Breast epithelium (tissue), 4 donors: ENCODE measurements at regions of chr10 and their contacts with region 1.

Region 1: DNA sequence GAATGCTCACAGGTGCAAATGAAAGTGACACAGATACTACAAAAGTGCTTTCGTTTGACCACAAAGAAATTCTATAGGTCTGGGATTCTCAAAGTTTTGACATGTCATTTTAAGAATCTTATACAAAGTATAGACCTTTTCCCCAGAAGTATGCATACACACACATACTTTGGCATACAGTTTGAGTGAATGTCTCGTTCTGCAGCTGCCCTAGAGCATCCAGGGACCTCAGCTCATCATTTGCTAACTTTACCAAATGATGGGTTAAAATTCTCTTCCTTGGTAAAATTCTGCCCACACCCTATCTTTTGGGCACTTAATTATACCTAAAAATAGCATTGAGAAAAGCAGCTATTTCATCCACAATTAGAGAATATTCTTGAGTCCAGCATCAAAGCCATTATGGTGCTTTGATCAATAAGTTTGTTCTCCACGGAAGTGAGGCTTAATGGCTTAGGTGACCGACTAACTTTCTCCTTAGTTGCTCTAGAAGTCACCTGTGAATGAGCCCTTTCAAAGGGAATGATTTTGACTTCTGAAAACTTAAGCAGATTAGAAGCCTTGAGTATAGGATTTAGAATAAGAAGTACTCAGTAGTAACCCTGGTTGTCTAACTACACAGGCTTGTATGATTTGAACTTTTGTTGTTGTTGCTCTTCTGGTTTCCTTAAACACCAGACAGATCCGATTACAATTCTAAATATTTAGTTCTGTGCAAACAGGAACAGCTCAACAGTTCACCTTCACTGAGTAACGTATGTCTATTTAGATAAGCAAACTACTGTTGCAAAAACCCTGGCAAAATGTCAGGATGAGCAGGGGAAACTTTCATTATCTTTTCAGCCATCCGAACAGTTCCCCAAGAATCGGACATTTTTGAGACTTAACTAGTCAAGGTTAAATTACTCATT is 70.6 kb downstream of the CNNM2 start:
- DNase-seq: no peak
- H3K4me3 ChIP-seq: no peak overlapping the region
- H3K27ac ChIP-seq: no peak overlapping the region
- H3K4me1 ChIP-seq: no peaks in the 10 kb centered on the region
- H3K27me3 ChIP-seq: no peaks in the 10 kb centered on the region
- CTCF ChIP-seq: no peak
- POLR2A ChIP-seq: no peak

Region 2: GRCh38 chr10:102554531-102554930 is 434.1 kb before region 1 on chr10:
- intact Hi-C with region 1: loop called (anchors 5 kb)
- DNase-seq: no peak
- H3K4me3 ChIP-seq: no peak overlapping the region
- H3K27ac ChIP-seq: no peak overlapping the region
- H3K4me1 ChIP-seq: no peaks in the 10 kb centered on the region
- H3K27me3 ChIP-seq: no peaks in the 10 kb centered on the region
- CTCF ChIP-seq: no peak
- POLR2A ChIP-seq: no peak

Region 3: GRCh38 chr10:102975483-102976379 is 12.9 kb before region 1 on chr10:
- intact Hi-C with region 1: loop called (anchors 1 kb)
- DNase-seq: no peak
- H3K4me3 ChIP-seq: no peak overlapping the region
- H3K27ac ChIP-seq: no peak overlapping the region
- H3K4me1 ChIP-seq: no peaks in the 10 kb centered on the region
- H3K27me3 ChIP-seq: no peaks in the 10 kb centered on the region
- CTCF ChIP-seq: no peak
- POLR2A ChIP-seq: no peak